ENCODE measurements at regions of chr11 and their contacts with region 1.

Region 1: DNA sequence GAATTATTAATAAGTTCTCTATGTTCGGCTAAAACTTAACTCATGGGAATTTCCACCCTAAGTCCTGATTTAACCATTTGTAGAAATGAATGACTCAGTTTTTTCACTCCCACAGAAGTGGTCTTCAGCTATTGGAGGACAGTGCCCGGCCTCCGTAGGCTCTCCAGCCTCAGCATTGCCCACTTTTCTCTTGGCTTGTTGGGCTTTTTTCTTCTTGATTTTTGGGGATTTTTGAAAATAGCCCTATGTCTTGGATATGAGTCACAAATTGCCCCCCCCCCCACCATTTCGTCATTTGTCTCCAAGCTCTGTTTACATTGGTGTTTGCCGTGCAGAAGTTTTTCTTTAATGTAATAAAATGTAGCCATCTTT is 66.7 kb downstream of the PACS1 start:
- DNase-seq: no peak
- H3K4me3 ChIP-seq: no peak overlapping the region
- H3K27ac ChIP-seq: peak overlapping the region in 7 of 8 donors; percentile 1 to 54 (median 32)
- H3K4me1 ChIP-seq: peaks cover 6 to 94% (median 49%) of the 10 kb centered on the region in 6 donors
- H3K27me3 ChIP-seq: no peaks in the 10 kb centered on the region
- CTCF ChIP-seq: no peak
- POLR2A ChIP-seq: no peak

Region 2: GRCh38 chr11:66069715-66070603 is 66.8 kb before region 1 on chr11 and contains the start of gene PACS1:
- intact Hi-C with region 1: loop called (anchors 10 kb)
- DNase-seq: peak; percentile 97
- H3K4me3 ChIP-seq: peak within 1 kb of the TSS; percentile 74 to 98 (median 84)
- H3K27ac ChIP-seq: peak within 1 kb of the TSS; percentile 95 to 99 (median 99)
- H3K4me1 ChIP-seq: peaks cover 33 to 87% (median 59%) of the 10 kb centered on the region in 6 donors
- H3K27me3 ChIP-seq: no peaks in the 10 kb centered on the region
- CTCF ChIP-seq: peak in 3 of 11 experiments; percentile 3 to 32 (median 16)
- POLR2A ChIP-seq: peak in 1 of 3 donors; percentile 13
- total RNA-seq, gene PACS1: 65.8 to 126 (median 110) TPM

Region 3: DNA sequence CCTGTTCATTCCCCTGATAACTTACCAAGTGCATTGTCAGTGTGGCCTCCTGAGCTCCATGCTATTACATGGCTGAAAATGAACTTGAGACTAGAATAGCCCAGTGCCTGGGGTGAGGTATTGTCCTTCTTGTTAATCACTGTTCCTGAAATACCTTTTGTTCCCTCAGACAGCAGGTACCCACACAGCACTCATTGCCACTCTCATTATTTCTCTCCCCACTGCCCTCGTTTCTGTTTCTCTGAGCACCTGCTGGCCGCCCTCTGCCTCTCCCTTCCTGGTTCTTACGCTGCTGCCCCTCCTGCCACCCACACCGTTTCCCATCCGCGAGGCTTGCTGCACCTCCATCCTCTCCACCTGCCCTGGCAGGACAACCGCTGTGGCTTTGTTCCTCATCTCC is 94.8 kb after region 1 on chr11:
- intact Hi-C with region 1: no loop called
- DNase-seq: no peak
- H3K4me3 ChIP-seq: no peak overlapping the region
- H3K27ac ChIP-seq: no peak overlapping the region
- H3K4me1 ChIP-seq: no peaks in the 10 kb centered on the region
- H3K27me3 ChIP-seq: no peaks in the 10 kb centered on the region
- CTCF ChIP-seq: no peak
- POLR2A ChIP-seq: no peak

Measured in spleen (tissue), 13 donors.